ENCODE measurements at regions of chr5 and their contacts with region 1.

Region 1: DNA sequence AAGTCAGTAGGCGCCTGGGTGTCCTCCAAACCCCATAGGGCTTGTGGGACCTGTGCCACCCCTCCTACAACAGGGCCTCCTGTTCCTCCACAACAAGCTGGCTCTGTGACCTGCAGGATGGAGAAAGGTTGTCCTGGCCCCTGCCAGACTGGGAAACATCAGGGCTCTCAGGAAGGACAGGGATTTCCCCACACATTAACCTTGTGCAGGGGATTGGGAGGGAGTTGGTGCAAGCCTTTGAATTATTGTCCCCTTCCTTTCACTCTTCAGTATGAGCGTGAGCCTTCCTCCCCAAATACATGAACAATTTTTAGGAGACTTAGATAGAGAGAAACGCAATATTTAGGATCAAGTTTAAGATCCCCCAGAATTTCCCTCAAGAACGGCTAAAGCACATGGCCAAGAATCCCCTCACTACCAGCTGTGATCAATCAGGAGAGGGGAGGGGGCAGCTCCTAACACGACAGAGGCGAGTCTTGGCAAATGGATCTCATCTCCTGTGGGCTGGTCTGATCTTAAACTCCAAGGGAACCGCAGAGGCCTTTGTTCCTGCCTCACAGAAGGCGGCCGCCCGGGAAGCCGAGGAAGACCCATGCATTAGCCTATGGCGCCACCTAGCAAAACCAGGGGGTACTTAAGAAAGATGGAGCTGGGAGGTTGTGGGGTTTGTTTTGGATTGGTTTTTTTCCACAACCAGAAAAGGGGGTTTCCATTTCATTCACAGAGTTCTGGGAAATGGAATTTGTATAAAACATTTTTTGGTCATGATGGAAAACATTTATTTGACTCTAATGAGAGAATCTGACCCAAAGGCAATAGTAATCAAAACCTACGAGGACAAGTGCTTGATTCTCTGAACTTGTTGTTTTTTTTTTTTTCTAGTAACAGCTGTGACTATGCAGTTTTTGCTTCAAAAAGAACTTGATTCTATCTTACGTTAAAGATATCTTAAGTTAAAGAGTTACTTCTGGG is 36.1 kb upstream of the OSMR start:
- DNase-seq: peak; percentile 75
- ATAC-seq: peak; percentile 72
- H3K4me3 ChIP-seq: no peak overlapping the region
- H3K27ac ChIP-seq: no peak overlapping the region; the same call in 1 of the 2 replicates
- H3K4me1 ChIP-seq: peaks cover 34 to 44% of the 10 kb centered on the region in 2 experiments
- H3K27me3 ChIP-seq: no peaks in the 10 kb centered on the region
- CTCF ChIP-seq: peak; percentile 69 to 88 (median 86)
- POLR2A ChIP-seq: no peak
- RAD21 ChIP-seq: peak; percentile 96

Region 2: GRCh38 chr5:38208782-38209378 is 600.8 kb before region 1 on chr5:
- CTCF ChIA-PET with region 1: interaction called, 16 read pairs
- POLR2A ChIA-PET with region 1: no interaction called
- RAD21 ChIA-PET with region 1: no interaction called
- intact Hi-C with region 1: loop called (anchors 1 kb)
- DNase-seq: peak; percentile 47
- ATAC-seq: peak; percentile 78
- H3K4me3 ChIP-seq: no peak overlapping the region
- H3K27ac ChIP-seq: no peak overlapping the region
- H3K4me1 ChIP-seq: peaks cover 0 to 3% of the 10 kb centered on the region in 2 experiments; a peak in 1 of 4 replicates
- H3K27me3 ChIP-seq: no peaks in the 10 kb centered on the region
- CTCF ChIP-seq: peak; percentile 57 to 69 (median 59); a peak in 4 of 6 replicates
- POLR2A ChIP-seq: no peak
- RAD21 ChIP-seq: peak; percentile 87

Region 3: DNA sequence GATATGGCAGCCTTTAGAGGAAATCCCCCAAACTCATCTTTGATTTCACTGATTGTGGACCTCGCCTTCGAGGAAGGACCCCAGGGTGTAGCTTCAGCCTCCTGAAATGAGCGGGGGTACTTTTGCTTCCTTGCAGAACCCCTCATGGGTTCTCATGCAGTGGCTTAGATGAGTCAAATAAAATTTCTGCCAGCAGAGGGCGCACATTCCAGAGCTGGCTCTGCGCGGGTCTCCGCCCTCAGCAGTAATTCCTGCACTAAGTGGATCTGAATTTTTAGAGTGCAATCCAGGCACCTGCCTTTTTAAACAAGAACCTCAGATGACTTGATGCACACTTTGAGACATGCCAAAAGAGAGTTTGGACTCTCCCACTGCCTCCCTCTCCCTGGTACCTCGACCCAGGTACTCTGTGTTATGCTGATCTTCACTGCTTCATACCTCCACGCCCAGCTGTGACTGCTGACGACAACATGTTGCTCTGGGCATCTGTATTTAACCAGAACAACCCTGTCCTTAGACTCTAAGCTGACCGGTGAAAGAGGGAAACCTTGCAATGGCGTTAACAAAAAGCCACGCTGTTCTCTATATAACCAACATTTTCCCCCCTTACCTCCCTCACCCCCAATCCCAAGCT is 544.0 kb before region 1 on chr5:
- CTCF ChIA-PET with region 1: interaction called, 12 read pairs
- POLR2A ChIA-PET with region 1: no interaction called
- RAD21 ChIA-PET with region 1: interaction called in 1 of 2 experiments, 3 read pairs
- intact Hi-C with region 1: loop called (anchors 1 kb)
- DNase-seq: peak; percentile 19
- ATAC-seq: peak; percentile 100
- H3K4me3 ChIP-seq: no peak overlapping the region
- H3K27ac ChIP-seq: no peak overlapping the region
- H3K4me1 ChIP-seq: peaks cover 3% of the 10 kb centered on the region in 2 experiments; a peak in 1 of 4 replicates
- H3K27me3 ChIP-seq: peaks cover 34% of the 10 kb centered on the region
- CTCF ChIP-seq: peak; percentile 25 to 85 (median 64); a peak in 5 of 6 replicates
- POLR2A ChIP-seq: no peak
- RAD21 ChIP-seq: peak; percentile 37

Region 4: GRCh38 chr5:38382898-38383297 is 426.8 kb before region 1 on chr5:
- CTCF ChIA-PET with region 1: interaction called, 28 read pairs
- POLR2A ChIA-PET with region 1: interaction called, 3 read pairs
- RAD21 ChIA-PET with region 1: interaction called in 1 of 2 experiments, 3 read pairs
- intact Hi-C with region 1: loop called (anchors 1 kb)
- DNase-seq: peak; percentile 80
- ATAC-seq: peak; percentile 100
- H3K4me3 ChIP-seq: no peak overlapping the region
- H3K27ac ChIP-seq: no peak overlapping the region
- H3K4me1 ChIP-seq: no peaks in the 10 kb centered on the region
- H3K27me3 ChIP-seq: peaks cover 20% of the 10 kb centered on the region; the same call in 1 of the 2 replicates
- CTCF ChIP-seq: peak; percentile 64 to 86 (median 84); a peak in 5 of 6 replicates
- POLR2A ChIP-seq: no peak
- RAD21 ChIP-seq: peak; percentile 76

Region 5: DNA sequence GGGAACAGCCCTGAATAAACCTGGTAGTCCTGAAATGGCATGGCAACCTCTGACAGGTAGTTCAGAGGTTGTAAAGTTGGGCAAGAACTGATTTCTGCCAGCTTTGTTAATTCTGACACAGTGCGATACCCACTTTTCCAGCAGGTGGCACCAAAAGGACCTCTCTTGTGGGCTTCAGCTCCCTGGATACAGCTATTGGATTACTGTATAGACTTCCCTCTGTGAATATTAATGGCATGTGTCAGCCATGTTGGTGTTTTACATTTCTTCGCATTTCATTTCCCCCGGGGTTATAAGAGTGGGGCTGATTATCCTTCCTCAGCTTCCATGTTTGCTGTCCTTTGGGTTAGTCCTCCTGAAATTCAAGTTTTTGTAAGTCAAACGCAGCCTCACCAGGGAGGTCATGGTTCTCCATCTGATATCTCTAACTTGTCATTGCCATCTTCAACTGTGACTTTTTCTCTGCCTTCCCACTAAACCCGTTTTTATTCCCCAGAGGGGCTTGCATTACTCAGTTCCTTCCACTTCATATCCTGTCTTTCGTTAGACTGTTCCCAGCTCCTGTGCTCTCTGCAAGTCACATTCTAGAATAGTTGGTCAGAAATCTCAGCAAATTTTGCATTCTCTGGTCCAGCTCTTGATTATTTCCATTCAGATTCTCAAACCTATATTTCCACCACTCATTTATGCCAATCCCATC is 388.8 kb before region 1 on chr5:
- CTCF ChIA-PET with region 1: interaction called, 82 read pairs
- POLR2A ChIA-PET with region 1: interaction called, 5 read pairs
- RAD21 ChIA-PET with region 1: interaction called, 13 to 17 read pairs
- intact Hi-C with region 1: loop called (anchors 1 kb)
- DNase-seq: peak; percentile 60
- ATAC-seq: peak; percentile 96
- H3K4me3 ChIP-seq: no peak overlapping the region
- H3K27ac ChIP-seq: no peak overlapping the region
- H3K4me1 ChIP-seq: peaks cover 0 to 9% of the 10 kb centered on the region in 2 experiments; a peak in 1 of 4 replicates
- H3K27me3 ChIP-seq: 0 out of 2 replicates have a peak, but pooled peaks cover 5% of the 10 kb centered on the region
- CTCF ChIP-seq: peak; percentile 58 to 86 (median 80); a peak in 5 of 6 replicates
- POLR2A ChIP-seq: no peak
- RAD21 ChIP-seq: peak; percentile 77

Region 6: GRCh38 chr5:38551030-38552017 is 258.4 kb before region 1 on chr5:
- CTCF ChIA-PET with region 1: interaction called, 8 read pairs
- POLR2A ChIA-PET with region 1: no interaction called
- RAD21 ChIA-PET with region 1: no interaction called
- intact Hi-C with region 1: loop called (anchors 5 kb)
- DNase-seq: peak; percentile 23
- ATAC-seq: peak; percentile 67
- H3K4me3 ChIP-seq: no peak overlapping the region
- H3K27ac ChIP-seq: no peak overlapping the region
- H3K4me1 ChIP-seq: peaks cover 12 to 28% of the 10 kb centered on the region in 2 experiments; a peak in 3 of 4 replicates
- H3K27me3 ChIP-seq: no peaks in the 10 kb centered on the region
- CTCF ChIP-seq: peak; percentile 50 to 77 (median 68); a peak in 5 of 6 replicates
- POLR2A ChIP-seq: no peak
- RAD21 ChIP-seq: peak; percentile 61

Region 7: DNA sequence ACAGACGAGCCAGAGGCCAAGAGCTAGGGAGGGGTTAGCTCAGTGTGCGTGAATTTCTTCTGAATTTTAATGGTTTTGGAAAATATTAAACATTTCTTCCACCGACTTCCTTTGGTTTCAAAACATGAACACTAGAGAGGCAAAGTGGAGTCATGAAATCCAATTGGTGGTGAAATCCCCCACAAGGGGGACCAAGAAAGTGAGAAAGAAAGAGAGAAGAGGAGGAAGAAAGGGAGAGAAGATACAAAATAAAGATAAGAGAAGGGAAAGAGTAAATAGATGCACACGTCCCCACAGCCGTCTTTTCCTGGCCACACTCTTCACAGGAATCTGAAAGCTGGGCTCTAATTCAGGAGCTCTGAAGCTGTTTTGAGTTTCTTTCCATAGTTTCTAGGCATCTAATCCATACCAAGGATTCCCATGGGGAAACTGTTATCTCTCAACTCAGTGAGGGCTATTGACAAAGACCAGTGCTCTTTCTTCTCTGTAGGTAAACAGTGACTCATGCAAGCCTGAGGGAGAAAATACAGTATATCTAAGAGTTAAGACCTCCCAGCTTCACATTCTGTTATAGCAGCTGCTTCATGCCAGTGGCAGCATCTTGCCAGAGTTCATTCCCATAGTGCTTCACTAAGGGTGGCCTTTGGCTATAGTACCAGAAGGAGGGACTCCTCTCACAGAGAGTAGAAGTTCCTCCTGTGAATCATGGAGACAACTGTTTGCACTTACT is 137.4 kb before region 1 on chr5:
- CTCF ChIA-PET with region 1: interaction called, 14 read pairs
- POLR2A ChIA-PET with region 1: no interaction called
- RAD21 ChIA-PET with region 1: interaction called in 1 of 2 experiments, 3 read pairs
- intact Hi-C with region 1: loop called (anchors 5 kb)
- DNase-seq: no peak
- ATAC-seq: no peak
- H3K4me3 ChIP-seq: no peak overlapping the region
- H3K27ac ChIP-seq: no peak overlapping the region
- H3K4me1 ChIP-seq: no peaks in the 10 kb centered on the region
- H3K27me3 ChIP-seq: no peaks in the 10 kb centered on the region
- CTCF ChIP-seq: no peak
- POLR2A ChIP-seq: no peak
- RAD21 ChIP-seq: no peak